ENCODE measurements at regions of chrX and their contacts with region 1.

Region 1: GRCh38 chrX:107776649-107777535 is 641 bp upstream of the NCBP2L start:
- DNase-seq: peak; percentile 90
- H3K4me3 ChIP-seq: peak overlapping the region; percentile 41
- H3K27ac ChIP-seq: no peak overlapping the region
- H3K4me1 ChIP-seq: peaks cover 5% of the 10 kb centered on the region
- H3K27me3 ChIP-seq: no peaks in the 10 kb centered on the region
- CTCF ChIP-seq: peak; percentile 82

Region 2: GRCh38 chrX:106894392-106894909 is 882.4 kb before region 1 on chrX:
- CTCF ChIA-PET with region 1: no interaction called
- POLR2A ChIA-PET with region 1: no interaction called
- intact Hi-C with region 1: loop called (anchors 10 kb)
- DNase-seq: peak; percentile 78
- H3K4me3 ChIP-seq: no peak overlapping the region
- H3K27ac ChIP-seq: no peak overlapping the region
- H3K4me1 ChIP-seq: no peaks in the 10 kb centered on the region
- H3K27me3 ChIP-seq: peaks cover 8% of the 10 kb centered on the region
- CTCF ChIP-seq: peak; percentile 87

Region 3: DNA sequence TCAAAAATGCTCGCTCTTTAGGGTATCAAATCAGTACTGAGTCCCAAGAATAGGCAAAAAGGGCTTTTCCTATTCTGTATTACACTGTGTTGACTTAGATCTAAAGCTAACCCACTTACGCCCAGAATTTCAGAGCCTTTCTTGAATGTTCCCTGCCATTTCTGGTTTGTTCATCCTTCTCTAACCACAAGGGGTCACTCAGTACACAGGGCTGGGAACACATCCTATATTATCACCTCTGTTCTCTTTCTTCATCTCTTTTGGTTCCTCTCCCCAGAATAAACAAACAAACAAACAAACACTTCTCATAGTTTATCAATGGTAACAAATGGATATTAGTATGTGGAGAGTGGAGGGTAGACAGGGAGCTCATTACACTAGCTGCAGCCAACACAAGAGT is 751.3 kb before region 1 on chrX:
- CTCF ChIA-PET with region 1: no interaction called
- POLR2A ChIA-PET with region 1: no interaction called
- intact Hi-C with region 1: loop called (anchors 5 kb)
- DNase-seq: peak; percentile 31
- H3K4me3 ChIP-seq: no peak overlapping the region
- H3K27ac ChIP-seq: no peak overlapping the region
- H3K4me1 ChIP-seq: no peaks in the 10 kb centered on the region
- H3K27me3 ChIP-seq: no peaks in the 10 kb centered on the region
- CTCF ChIP-seq: peak; percentile 67

Region 4: GRCh38 chrX:107421408-107421807 is 355.5 kb before region 1 on chrX:
- CTCF ChIA-PET with region 1: no interaction called
- POLR2A ChIA-PET with region 1: no interaction called
- intact Hi-C with region 1: no loop called
- DNase-seq: no peak
- H3K4me3 ChIP-seq: no peak overlapping the region
- H3K27ac ChIP-seq: no peak overlapping the region
- H3K4me1 ChIP-seq: no peaks in the 10 kb centered on the region
- H3K27me3 ChIP-seq: no peaks in the 10 kb centered on the region
- CTCF ChIP-seq: no peak

Region 5: DNA sequence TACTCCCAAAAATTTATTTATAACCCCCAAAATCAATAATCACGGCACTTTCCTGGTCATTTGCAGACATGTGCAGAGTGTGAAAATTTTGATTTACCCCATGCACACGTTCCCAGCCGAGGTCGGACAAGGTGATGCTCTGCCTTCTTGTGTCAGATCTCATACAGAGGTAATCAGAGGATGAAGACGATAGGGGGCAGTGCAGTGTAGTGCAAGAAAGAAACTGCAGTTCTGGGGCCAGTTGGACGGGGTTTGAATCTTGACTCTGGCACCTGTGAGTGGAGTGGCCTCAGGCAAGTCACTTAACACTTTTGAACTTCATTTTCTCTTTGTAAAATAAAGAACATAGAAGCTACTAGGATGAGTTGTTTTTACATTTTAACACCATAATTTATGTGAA is 239.1 kb before region 1 on chrX:
- CTCF ChIA-PET with region 1: interaction called, 5 read pairs
- POLR2A ChIA-PET with region 1: no interaction called
- intact Hi-C with region 1: loop called (anchors 2 kb)
- DNase-seq: peak; percentile 21
- H3K4me3 ChIP-seq: no peak overlapping the region
- H3K27ac ChIP-seq: no peak overlapping the region
- H3K4me1 ChIP-seq: no peaks in the 10 kb centered on the region
- H3K27me3 ChIP-seq: no peaks in the 10 kb centered on the region
- CTCF ChIP-seq: peak; percentile 62

Region 6: DNA sequence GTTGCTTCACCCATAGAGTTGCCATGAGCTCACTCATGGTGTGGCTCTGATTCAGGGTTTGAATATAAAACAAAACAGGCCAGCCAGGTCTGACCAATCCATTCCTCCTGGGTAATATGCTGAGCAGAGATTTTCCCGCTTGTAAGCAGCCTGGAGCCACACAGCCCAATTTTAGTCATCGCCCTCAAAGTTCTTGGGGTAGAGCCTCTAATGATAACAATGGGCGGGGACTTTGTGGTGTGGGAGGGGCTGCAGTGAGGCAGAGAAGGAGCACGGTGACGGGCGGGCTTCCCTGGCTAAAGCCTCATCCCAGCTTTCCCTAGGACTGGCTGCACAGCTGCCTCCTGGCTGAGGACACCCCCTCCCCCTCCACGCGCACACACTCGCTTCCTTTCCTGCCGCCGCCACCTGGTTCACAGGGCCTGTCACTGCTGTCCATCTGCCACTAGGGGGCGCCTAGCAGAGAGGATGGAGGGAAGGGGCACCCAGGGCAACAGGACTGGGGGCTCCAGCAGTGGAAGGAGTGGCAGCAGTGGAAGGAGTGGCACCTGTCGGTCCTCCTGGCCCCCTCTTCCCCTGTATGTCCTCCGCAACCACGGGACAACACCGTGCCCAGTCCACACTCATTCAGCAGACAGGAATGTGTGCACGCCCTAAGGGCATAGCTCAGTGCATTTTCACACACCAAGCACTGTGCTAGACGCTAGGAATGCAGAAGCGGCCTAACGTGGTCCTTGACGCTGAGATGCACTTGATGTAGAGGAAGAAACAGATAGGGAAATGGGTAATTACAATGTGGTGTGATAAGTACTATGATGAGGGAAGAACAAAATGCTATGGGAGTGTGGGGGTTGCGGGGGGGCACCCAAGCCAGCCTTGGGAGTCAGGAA is 121.8 kb before region 1 on chrX:
- CTCF ChIA-PET with region 1: interaction called, 20 read pairs
- POLR2A ChIA-PET with region 1: no interaction called
- intact Hi-C with region 1: loop called (anchors 1 kb)
- DNase-seq: peak; percentile 65
- H3K4me3 ChIP-seq: no peak overlapping the region
- H3K27ac ChIP-seq: no peak overlapping the region
- H3K4me1 ChIP-seq: no peaks in the 10 kb centered on the region
- H3K27me3 ChIP-seq: no peaks in the 10 kb centered on the region
- CTCF ChIP-seq: peak; percentile 85

Region 7: GRCh38 chrX:107672955-107673378 is 103.9 kb before region 1 on chrX:
- CTCF ChIA-PET with region 1: interaction called, 10 read pairs
- POLR2A ChIA-PET with region 1: no interaction called
- intact Hi-C with region 1: loop called (anchors 2 kb)
- DNase-seq: peak; percentile 63
- H3K4me3 ChIP-seq: no peak overlapping the region
- H3K27ac ChIP-seq: no peak overlapping the region
- H3K4me1 ChIP-seq: peaks cover 26% of the 10 kb centered on the region
- H3K27me3 ChIP-seq: peaks cover 6% of the 10 kb centered on the region
- CTCF ChIP-seq: peak; percentile 70

Region 8: DNA sequence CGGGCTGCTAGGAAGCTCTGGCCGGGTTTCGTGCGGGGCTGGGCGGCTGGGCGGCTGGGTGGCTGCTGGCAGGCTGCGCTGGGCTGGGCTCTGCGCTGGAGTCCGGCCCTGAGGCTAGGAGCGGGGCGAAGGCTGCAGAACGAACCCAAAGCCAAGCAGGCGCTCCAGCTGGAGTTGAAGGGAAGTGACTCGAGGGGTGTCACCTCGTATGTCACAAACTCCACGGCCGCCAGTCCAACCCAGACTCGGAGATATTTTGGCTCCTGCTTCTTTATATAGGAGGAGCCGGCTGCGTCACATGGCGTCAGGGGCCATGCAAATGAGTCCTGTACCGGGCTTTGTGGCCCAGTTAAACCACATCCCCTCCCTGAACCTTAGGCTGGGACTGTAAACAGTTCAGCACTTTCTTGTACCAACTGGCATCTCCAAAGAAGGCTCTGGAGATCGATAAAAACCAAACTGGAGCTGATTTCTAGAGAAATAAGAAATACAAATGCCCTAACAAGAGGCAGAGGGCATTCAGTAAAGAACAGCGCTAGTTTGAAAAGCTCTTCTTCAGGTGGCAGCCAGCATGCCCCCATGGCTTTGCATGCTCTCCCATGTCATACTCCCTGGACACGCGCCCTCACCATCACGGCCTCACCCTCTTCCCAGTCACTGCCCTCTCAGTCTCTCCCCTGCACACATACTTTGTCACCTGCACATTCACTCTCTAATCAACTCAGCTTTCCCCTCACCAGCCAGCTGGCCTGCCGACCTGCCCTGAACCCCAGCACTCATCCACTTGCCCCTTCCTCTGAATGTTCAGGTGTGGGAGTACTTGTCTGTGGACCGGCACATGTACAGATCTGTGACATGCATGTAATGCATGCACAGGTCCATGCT is 59.8 kb before region 1 on chrX:
- CTCF ChIA-PET with region 1: interaction called, 3 read pairs
- POLR2A ChIA-PET with region 1: no interaction called
- intact Hi-C with region 1: loop called (anchors 2 kb)
- DNase-seq: peak; percentile 60
- H3K4me3 ChIP-seq: peak overlapping the region; percentile 55
- H3K27ac ChIP-seq: peak overlapping the region; percentile 68
- H3K4me1 ChIP-seq: peaks cover 4% of the 10 kb centered on the region
- H3K27me3 ChIP-seq: no peaks in the 10 kb centered on the region
- CTCF ChIP-seq: no peak